Gastrocnemius medialis (tissue), 4 donors: ENCODE measurements at regions of chr3 and their contacts with region 1.

Region 1: GRCh38 chr3:107740992-107741896 is 218.5 kb downstream of the BBX start:
- DNase-seq: no peak
- ATAC-seq: no peak
- H3K4me3 ChIP-seq: no peak overlapping the region
- H3K27ac ChIP-seq: no peak overlapping the region
- H3K4me1 ChIP-seq: no peaks in the 10 kb centered on the region
- H3K27me3 ChIP-seq: no peaks in the 10 kb centered on the region
- CTCF ChIP-seq: peak; percentile 25 to 67 (median 59)
- POLR2A ChIP-seq: no peak

Region 2: GRCh38 chr3:107574650-107575049 is 166.6 kb before region 1 on chr3:
- in situ Hi-C with region 1: loop called in 1 of 4 experiments (anchors 10 kb)
- intact Hi-C with region 1: loop called (anchors 2 kb)
- DNase-seq: no peak
- ATAC-seq: peak; percentile 65 to 75
- H3K4me3 ChIP-seq: no peak overlapping the region
- H3K27ac ChIP-seq: no peak overlapping the region
- H3K4me1 ChIP-seq: no peaks in the 10 kb centered on the region
- H3K27me3 ChIP-seq: no peaks in the 10 kb centered on the region
- CTCF ChIP-seq: peak; percentile 20 to 58 (median 39)
- POLR2A ChIP-seq: no peak

Region 3: DNA sequence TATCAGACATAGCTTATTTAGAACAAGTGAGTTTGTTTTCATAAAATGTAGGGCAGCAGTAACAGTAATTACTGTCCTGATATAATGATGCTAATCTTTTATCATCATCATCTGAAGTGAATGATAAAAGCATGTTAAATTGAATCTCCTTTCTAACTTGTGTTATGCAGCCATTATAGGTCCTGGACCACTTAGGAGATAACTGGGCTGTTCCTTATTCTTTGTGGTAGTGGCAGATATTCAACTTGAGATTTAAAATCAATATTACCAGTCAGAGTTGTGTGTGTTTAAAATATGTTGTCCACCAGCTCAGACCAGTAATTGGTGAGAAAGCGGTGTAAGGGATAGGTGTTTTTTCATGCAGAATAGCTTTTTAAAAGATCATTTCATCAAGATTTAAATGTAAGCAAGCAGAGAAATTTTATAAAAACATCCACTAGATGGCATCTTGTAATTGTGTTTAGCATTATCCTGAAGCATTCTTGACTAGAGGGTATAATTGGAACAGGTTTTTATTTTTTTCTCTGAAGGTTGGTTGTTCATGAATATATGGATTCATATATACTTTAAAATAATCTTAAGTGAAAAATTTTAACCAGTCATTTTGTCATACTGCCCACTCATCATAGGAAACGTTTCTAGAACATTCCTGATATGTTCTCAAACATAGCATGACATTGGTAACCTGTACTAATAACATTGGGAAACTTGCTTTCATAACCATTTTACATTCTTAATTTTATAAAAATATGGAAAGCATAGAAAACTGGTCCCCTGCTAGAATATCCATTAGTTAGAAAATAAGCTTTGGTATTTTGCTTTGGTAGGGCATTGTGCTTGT is 64.6 kb before region 1 on chr3:
- in situ Hi-C with region 1: loop called in 2 of 4 experiments (anchors 10 kb)
- intact Hi-C with region 1: loop called (anchors 5 kb)
- DNase-seq: no peak
- ATAC-seq: no peak
- H3K4me3 ChIP-seq: no peak overlapping the region
- H3K27ac ChIP-seq: no peak overlapping the region
- H3K4me1 ChIP-seq: peaks cover 0 to 11% of the 10 kb centered on the region in 2 donors
- H3K27me3 ChIP-seq: no peaks in the 10 kb centered on the region
- CTCF ChIP-seq: peak; percentile 32 to 70 (median 55)
- POLR2A ChIP-seq: no peak

Region 4: GRCh38 chr3:107690522-107691138 is 50.6 kb before region 1 on chr3:
- in situ Hi-C with region 1: no loop called
- intact Hi-C with region 1: loop called (anchors 2 kb)
- DNase-seq: no peak
- ATAC-seq: no peak
- H3K4me3 ChIP-seq: no peak overlapping the region
- H3K27ac ChIP-seq: no peak overlapping the region
- H3K4me1 ChIP-seq: no peaks in the 10 kb centered on the region
- H3K27me3 ChIP-seq: no peaks in the 10 kb centered on the region
- CTCF ChIP-seq: peak; percentile 27 to 54 (median 41)
- POLR2A ChIP-seq: no peak